IMR-90 (cell line): ENCODE measurements at regions of chr2 and their contacts with region 1.

Region 1: DNA sequence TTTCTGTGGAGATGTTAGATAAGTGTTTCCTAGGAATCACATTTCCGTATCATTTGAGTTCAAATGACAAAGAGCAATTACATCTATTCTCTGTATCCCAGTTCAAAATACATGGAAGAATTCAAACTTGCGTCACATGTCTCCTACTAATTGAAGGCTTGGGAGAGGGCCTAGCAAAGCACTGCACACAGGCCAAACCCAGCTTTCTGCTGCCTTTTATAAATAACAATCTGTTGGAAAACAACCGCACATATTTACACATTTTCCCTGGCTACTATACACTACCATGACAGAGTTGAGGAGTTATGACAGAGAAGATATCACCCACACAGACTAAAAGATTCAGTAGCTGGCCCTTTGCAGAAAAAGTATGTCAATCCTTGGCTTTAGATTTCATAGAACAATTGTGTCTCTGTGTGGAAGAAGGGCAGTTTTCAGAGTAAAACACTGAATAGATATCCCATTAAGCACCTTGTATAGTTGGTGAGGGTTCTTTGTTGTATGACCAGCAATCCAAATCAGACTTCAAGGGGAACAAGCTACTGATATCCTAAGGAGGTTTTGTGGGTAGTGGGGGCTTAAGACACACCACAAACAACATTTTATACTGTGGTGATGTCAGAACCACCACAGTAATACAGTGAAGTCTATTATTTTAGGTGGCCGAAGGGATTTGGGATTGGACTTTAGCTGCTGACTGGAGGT is 861.3 kb downstream of the CCDC85A start:
- DNase-seq: no peak
- ATAC-seq: no peak
- H3K4me3 ChIP-seq: no peak overlapping the region
- H3K27ac ChIP-seq: no peak overlapping the region
- H3K4me1 ChIP-seq: no peaks in the 10 kb centered on the region
- H3K27me3 ChIP-seq: no peaks in the 10 kb centered on the region
- CTCF ChIP-seq: no peak
- POLR2A ChIP-seq: no peak
- RAD21 ChIP-seq: no peak

Region 2: GRCh38 chr2:56971383-56971974 is 73.6 kb before region 1 on chr2:
- CTCF ChIA-PET with region 1: no interaction called
- POLR2A ChIA-PET with region 1: no interaction called
- dilution Hi-C with region 1: no loop called
- in situ Hi-C with region 1: no loop called
- intact Hi-C with region 1: loop called (anchors 1 kb)
- DNase-seq: no peak
- ATAC-seq: no peak
- H3K4me3 ChIP-seq: no peak overlapping the region
- H3K27ac ChIP-seq: no peak overlapping the region
- H3K4me1 ChIP-seq: no peaks in the 10 kb centered on the region
- H3K27me3 ChIP-seq: no peaks in the 10 kb centered on the region
- CTCF ChIP-seq: no peak
- POLR2A ChIP-seq: no peak
- RAD21 ChIP-seq: no peak